ENCODE measurements at regions of chr10 and their contacts with region 1.

Region 1: DNA sequence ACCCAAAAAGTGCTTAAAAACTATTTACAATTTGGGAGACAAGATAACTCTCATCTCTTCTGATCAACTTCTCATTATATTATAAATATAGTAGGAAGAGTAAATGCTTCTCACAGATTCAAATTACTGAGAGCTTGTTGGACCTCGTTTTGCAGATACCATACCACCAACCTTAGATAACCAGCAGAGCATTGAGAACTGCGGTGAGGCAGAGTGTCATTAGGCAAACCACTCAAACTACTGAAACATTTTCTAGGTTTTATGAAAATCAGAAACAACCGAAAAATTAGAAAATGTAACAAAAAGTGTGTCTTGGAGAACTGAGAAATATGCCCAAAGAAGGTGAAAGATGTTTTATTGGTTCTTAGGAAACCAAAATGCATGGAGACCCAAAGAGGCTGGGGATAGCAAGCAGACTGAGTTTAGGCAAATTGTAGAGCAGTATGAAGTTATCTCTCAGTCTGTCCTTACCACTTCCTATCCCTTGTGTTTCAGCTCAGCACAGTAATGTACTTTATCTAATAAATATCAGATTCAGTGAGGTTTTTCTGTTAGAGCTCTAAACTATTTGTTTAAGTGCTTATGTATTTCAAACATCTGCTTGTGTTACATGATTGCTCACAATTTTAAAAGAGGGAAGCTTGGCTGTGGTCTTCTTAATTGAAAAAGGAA is 77.9 kb downstream of the HECTD2 start:
- DNase-seq: no peak
- ATAC-seq: no peak

Region 2: GRCh38 chr10:89829887-89830269 is 1658.2 kb before region 1 on chr10:
- intact Hi-C with region 1: no loop called
- DNase-seq: no peak
- ATAC-seq: no peak

Region 3: DNA sequence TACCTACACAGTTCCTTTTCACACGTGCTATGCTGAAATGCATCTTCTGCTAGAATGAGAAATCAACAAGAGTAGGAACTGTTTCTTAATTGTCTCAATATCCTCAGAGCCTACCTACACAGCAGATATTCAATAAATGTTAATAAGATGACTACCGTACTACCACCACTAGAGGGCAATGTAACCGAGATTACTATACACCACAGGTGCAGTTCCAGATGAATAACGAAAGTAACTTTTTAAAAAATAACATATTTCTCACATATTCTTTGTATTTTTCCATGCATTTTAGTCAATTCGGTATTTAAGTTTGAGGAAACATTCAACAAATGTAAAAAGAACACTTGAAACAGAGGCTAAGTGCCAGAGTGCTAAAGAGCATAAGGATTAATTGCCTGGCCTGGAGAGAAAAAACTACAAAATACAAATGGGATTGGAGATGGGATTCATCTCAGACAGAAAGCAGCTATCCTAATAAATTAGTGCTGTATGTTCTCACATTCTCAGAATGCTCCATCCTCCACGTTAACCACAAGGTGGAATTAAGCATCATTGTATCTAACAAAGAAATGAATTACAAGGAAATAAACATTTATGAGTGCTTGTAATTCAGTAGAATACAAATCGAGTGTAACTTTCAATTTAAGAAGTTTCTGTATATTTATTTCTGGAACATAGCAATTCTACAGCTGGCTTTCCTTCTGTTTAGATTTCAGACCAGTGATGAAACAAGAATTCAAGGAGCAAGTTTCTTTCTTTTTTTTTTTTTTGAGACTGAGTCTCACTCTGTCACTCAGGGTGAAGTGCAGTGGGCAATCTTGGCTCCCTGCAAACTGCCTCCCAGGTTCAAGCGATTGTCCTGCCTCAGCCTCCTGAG is 98.2 kb before region 1 on chr10:
- intact Hi-C with region 1: loop called in 1 of 2 experiments (anchors 10 kb)
- DNase-seq: no peak
- ATAC-seq: peak; percentile 76

Measured in left cardiac atrium (tissue), 4 donors.